Activated T-helper 1 cell treated with anti-CD3 and anti-CD28 coated beads, Interleukin-12 subunit alpha, Interleukin-12 subunit beta, Interleukin-2, Interleukin-4 antibody, amounts not matched to agents 30 ng/mL and 10 ng/mL and 1 ng/mL, durations not matched to agents 14 hours and 24 hours and 36 hours (primary cell): ENCODE measurements at regions of chr7 and their contacts with region 1.

Region 1: GRCh38 chr7:8042796-8043535 is 74.4 kb downstream of the GLCCI1 start:
- DNase-seq: no peak
- H3K4me3 Mint-ChIP-seq: no peak overlapping the region
- H3K27ac Mint-ChIP-seq: peak overlapping the region; percentile 61
- H3K4me1 Mint-ChIP-seq: peaks cover 74% of the 10 kb centered on the region
- H3K27me3 Mint-ChIP-seq: no peaks in the 10 kb centered on the region

Region 2: DNA sequence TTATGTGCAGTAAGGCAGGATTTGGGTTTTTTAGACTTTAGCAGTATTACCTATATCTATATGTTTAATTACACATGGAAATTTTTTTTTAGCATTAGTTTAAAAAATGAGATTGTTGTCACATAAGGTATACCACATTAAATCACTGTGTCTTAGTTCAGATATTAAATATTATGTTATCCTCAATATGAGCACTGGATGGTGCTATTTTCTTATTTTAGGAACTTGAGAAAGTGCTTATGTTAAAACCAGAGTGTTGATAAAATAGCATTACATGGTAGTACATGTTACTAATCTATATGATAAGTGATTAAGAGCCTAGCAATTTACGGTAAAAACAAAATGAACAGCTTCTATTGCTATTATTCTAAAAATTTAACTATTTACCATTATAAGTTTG is 447.5 kb before region 1 on chr7:
- intact Hi-C with region 1: loop called (anchors 10 kb)
- DNase-seq: no peak
- H3K4me3 Mint-ChIP-seq: no peak overlapping the region
- H3K27ac Mint-ChIP-seq: no peak overlapping the region
- H3K4me1 Mint-ChIP-seq: no peaks in the 10 kb centered on the region
- H3K27me3 Mint-ChIP-seq: no peaks in the 10 kb centered on the region

Region 3: DNA sequence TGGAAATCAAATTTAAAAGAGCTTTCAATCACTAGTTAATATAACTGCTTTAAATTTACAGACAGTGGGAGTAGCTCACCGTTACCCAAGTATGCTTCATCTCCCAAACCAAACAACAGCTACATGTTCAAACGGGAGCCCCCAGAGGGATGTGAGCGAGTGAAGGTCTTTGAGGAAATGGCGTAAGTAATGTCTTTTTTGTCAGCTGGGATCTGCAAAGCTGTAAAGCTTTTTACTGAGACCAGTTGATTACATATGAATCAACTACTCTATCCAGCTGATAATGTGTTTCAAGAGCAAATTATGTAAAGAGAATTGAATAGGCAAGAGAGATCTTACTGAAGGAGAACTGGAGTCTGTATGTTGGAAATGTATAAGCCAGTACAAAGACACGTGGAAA is 41.9 kb after region 1 on chr7:
- intact Hi-C with region 1: loop called (anchors 5 kb)
- DNase-seq: no peak
- H3K4me3 Mint-ChIP-seq: no peak overlapping the region
- H3K27ac Mint-ChIP-seq: no peak overlapping the region
- H3K4me1 Mint-ChIP-seq: no peaks in the 10 kb centered on the region
- H3K27me3 Mint-ChIP-seq: no peaks in the 10 kb centered on the region